A673 (cell line): ENCODE measurements at regions of chr2 and their contacts with region 1.

Region 1: DNA sequence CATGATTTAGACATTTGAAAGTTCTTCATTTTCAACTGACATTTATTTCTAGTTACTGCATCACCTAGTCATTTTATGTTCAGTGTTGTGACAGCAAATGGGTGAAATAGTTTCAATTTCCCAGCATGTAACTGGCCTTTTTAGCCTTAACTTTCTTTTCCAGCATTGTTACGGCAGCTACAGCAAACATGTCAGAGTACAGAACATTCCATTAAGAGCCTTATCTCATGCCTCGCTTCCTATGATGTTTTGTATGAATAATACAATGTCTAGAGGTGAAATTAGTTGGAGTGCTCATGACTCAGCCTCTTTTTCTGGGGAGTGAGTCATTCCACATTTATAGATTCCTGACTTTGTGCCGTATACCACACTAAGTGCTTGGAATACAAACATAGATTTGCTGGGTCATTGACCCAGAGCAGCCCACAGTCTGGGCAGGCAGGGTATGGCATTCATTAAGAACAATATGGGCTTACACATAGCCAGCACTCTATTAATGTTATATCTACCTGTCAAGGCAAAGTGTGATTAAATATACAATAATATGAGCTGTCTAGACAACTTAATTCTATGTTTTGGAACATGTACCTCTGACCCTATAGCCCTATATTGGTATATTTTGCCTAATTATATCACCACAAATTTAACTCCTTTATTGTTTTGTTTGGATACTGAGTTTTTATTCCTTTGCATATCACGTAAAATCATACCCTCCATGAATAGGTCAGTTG is 72.2 kb downstream of the MAP2 start:
- DNase-seq: peak; percentile 79
- H3K4me3 ChIP-seq: no peak overlapping the region
- H3K27ac ChIP-seq: no peak overlapping the region
- H3K4me1 ChIP-seq: no peaks in the 10 kb centered on the region
- H3K27me3 ChIP-seq: no peaks in the 10 kb centered on the region
- CTCF ChIP-seq: no peak

Region 2: DNA sequence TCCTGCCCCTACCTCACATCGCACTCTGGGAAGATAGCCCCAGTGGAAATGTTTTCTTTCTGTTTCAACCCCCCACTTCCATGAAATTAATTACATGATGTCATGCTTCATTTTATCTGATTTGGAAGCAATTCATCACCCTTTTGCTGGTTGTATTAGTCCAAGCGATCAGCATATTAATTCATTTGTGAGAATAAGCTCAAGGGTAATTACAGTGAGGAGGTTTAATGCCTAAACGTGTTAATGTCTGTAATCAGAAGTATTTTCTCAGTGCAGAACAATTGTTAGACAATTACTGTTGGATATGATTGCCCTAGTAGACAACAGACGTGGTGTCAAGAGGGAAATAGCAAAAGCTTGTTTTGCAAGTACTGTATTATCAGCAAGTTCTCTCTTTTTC is 1806.7 kb after region 1 on chr2:
- CTCF ChIA-PET with region 1: no interaction called
- POLR2A ChIA-PET with region 1: no interaction called
- intact Hi-C with region 1: loop called (anchors 10 kb)
- DNase-seq: no peak
- H3K4me3 ChIP-seq: no peak overlapping the region
- H3K27ac ChIP-seq: no peak overlapping the region
- H3K4me1 ChIP-seq: peaks cover 8% of the 10 kb centered on the region
- H3K27me3 ChIP-seq: no peaks in the 10 kb centered on the region
- CTCF ChIP-seq: no peak